Sigmoid colon (tissue), 7 donors: ENCODE measurements at regions of chr2 and their contacts with region 1.

Region 1: DNA sequence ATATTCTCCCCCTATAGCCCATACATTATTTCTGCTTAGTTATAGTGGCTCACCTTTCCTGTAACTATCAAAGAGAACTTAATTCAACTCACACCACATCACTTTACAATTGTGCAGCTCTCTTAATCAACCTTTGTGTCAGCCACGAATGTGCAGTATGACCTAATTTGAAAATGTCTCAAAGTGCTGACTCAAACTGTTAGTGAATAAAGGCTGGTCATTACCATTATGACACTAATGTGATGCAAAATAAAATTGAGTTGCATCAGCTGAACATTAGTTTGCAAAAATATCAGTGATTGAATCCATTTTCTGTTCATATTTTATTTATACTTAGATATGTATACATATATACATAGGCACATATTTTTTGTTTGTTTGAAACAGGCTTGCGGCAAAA is 251.8 kb downstream of the MEIS1 start:
- DNase-seq: no peak
- H3K4me3 ChIP-seq: no peak overlapping the region
- H3K27ac ChIP-seq: peak overlapping the region; percentile 76 to 91 (median 85)
- H3K4me1 ChIP-seq: peaks cover 0 to 55% (median 23%) of the 10 kb centered on the region in 4 donors
- H3K27me3 ChIP-seq: no peaks in the 10 kb centered on the region
- CTCF ChIP-seq: no peak
- EP300 ChIP-seq: no peak
- POLR2A ChIP-seq: no peak

Region 2: DNA sequence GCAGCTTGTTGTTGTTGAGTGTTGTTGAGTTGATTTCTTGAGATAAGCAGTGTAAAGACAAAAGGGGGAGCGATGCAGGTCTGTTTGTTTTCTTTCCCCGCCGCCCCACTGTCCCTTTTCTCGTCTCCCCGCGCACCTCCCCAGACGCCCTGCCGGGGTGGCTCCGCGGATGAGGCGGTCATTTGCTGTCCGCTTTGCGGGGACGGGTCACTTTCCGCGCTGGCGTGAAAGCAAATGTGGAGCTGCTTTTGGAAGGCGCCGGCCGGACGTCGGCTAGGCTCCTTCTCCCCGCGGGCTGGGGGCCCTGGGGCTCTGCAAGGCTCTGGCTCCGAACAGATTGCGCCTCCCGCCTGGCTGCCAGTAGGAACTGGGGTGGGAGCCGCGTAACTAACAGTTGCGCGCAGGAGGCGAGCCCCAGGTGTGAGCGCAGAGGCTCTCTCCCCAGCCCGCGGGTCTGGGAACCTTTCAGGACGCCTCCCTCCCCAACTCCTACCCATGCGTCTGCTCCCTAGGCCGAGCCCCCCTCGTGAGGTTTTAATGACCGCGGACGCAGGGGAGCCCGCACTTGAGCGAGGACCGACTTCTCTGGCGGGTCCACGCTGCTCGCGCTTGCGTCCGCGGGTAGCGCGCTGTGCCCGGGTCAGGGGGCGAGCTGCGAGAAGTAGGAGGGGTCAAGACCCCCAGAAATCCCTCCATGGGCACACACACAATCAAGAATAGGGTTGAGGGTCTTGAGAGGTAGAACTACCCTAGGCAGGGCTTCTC is 105.2 kb before region 1 on chr2:
- intact Hi-C with region 1: loop called (anchors 1 kb)
- DNase-seq: peak; percentile 89
- H3K4me3 ChIP-seq: peak overlapping the region; percentile 43 to 73 (median 57)
- H3K27ac ChIP-seq: peak overlapping the region; percentile 95 to 99 (median 98)
- H3K4me1 ChIP-seq: peaks cover 0 to 35% (median 22%) of the 10 kb centered on the region in 4 donors
- H3K27me3 ChIP-seq: peaks cover 0 to 3% (median 3%) of the 10 kb centered on the region in 3 donors
- CTCF ChIP-seq: no peak
- EP300 ChIP-seq: no peak
- POLR2A ChIP-seq: peak; percentile 25 to 39

Region 3: GRCh38 chr2:66962625-66963207 is 276.0 kb after region 1 on chr2:
- intact Hi-C with region 1: loop called (anchors 10 kb)
- DNase-seq: peak; percentile 94
- H3K4me3 ChIP-seq: no peak overlapping the region
- H3K27ac ChIP-seq: peak overlapping the region; percentile 44 to 87 (median 82)
- H3K4me1 ChIP-seq: peaks cover 0 to 51% (median 26%) of the 10 kb centered on the region in 4 donors
- H3K27me3 ChIP-seq: no peaks in the 10 kb centered on the region
- CTCF ChIP-seq: no peak
- EP300 ChIP-seq: peak; percentile 58 to 93 (median 78)
- POLR2A ChIP-seq: no peak

Region 4: GRCh38 chr2:66994654-66995053 is 307.9 kb after region 1 on chr2:
- intact Hi-C with region 1: loop called (anchors 5 kb)
- DNase-seq: no peak
- H3K4me3 ChIP-seq: no peak overlapping the region
- H3K27ac ChIP-seq: peak overlapping the region in 3 of 4 donors; percentile 67 to 78 (median 77)
- H3K4me1 ChIP-seq: peaks cover 0 to 43% (median 19%) of the 10 kb centered on the region in 4 donors
- H3K27me3 ChIP-seq: no peaks in the 10 kb centered on the region
- CTCF ChIP-seq: no peak
- EP300 ChIP-seq: no peak
- POLR2A ChIP-seq: no peak

Region 5: GRCh38 chr2:67215214-67216055 is 528.7 kb after region 1 on chr2:
- intact Hi-C with region 1: loop called (anchors 5 kb)
- DNase-seq: peak; percentile 89
- H3K4me3 ChIP-seq: peak overlapping the region in 1 of 4 donors; percentile 17
- H3K27ac ChIP-seq: peak overlapping the region; percentile 65 to 83 (median 74)
- H3K4me1 ChIP-seq: peaks cover 0 to 52% (median 27%) of the 10 kb centered on the region in 4 donors
- H3K27me3 ChIP-seq: no peaks in the 10 kb centered on the region
- CTCF ChIP-seq: peak; percentile 27 to 51 (median 45)
- EP300 ChIP-seq: no peak
- POLR2A ChIP-seq: no peak

Region 6: DNA sequence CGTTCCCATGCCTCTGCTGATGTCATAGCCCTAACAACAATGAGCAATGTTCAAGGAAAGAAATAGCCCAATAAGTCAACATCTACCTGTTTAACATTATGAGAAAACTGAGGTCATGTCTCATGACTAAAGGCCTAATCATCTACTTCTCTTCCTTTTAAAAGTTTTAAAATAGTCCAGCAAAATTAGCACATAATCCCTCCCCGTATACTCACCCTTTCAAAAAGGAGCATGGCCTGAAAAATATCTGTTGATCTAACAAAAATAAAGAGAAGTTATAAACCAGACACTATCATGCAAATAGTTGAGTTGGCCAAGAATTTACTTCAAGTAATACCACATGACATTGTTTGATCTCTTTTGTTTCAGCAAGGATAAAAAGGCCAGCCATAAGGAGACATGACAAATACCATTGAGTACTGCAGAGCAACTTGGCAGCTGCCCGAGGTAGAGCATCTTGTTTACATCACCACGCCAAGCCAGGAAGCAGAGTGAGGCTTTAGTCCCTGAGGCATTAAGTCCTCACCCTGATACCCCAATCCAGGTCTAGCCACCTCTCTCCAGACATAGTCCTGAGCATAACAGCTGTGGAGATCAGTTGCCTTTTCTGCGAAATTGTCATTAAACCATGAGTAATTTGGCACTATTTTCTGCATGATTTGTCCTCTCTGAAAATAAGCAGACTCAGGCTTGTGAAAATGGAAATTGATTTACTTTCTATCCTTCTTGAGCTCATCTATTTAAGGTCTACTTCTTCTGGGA is 573.0 kb after region 1 on chr2:
- intact Hi-C with region 1: loop called (anchors 5 kb)
- DNase-seq: peak; percentile 94
- H3K4me3 ChIP-seq: no peak overlapping the region
- H3K27ac ChIP-seq: peak overlapping the region; percentile 84 to 89 (median 86)
- H3K4me1 ChIP-seq: peaks cover 0 to 28% (median 19%) of the 10 kb centered on the region in 4 donors
- H3K27me3 ChIP-seq: no peaks in the 10 kb centered on the region
- CTCF ChIP-seq: no peak
- EP300 ChIP-seq: peak; percentile 51 to 86 (median 62)
- POLR2A ChIP-seq: no peak